A549 (cell line): ENCODE measurements at regions of chrX and their contacts with region 1.

Region 1: GRCh38 chrX:24410514-24411189 is 50.2 kb downstream of the SUPT20HL1 start:
- DNase-seq: no peak
- ATAC-seq: no peak
- H3K4me3 ChIP-seq: no peak overlapping the region
- H3K27ac ChIP-seq: no peak overlapping the region
- H3K4me1 ChIP-seq: no peaks in the 10 kb centered on the region
- CTCF ChIP-seq: no peak
- EP300 ChIP-seq: no peak
- POLR2A ChIP-seq: no peak
- RAD21 ChIP-seq: no peak

Region 2: DNA sequence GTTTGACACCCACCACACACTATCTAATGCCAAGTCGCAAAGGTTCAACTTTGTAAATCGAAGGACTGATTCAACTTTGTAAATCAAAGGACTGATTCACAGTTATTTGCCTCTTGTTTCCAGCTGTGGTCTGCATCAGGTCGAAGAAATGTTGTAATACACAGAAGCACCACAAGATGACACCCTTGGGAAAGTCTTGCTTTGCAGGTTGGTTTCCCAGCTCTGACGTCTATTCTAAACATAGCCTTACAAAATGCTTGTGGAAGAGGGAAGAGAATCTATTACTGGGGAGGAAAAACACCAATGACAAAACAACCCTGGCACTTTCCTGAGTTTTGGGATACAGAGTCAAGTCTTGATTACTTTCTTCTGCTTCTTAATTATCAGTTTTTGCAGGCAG is 14.9 kb before region 1 on chrX:
- CTCF ChIA-PET with region 1: interaction called, 16 read pairs
- POLR2A ChIA-PET with region 1: no interaction called
- DNase-seq: peak; percentile 57 to 71
- ATAC-seq: peak; percentile 81 to 94
- H3K4me3 ChIP-seq: no peak overlapping the region
- H3K27ac ChIP-seq: no peak overlapping the region
- H3K4me1 ChIP-seq: no peaks in the 10 kb centered on the region
- CTCF ChIP-seq: peak; percentile 79
- EP300 ChIP-seq: no peak
- POLR2A ChIP-seq: no peak
- RAD21 ChIP-seq: peak; percentile 85 to 94